Spleen (tissue), 13 donors: ENCODE measurements at regions of chr16 and their contacts with region 1.

Region 1: GRCh38 chr16:714558-715476 is at the start of gene METRN:
- DNase-seq: peak; percentile 95
- H3K4me3 ChIP-seq: peak within 1 kb of the TSS; percentile 67 to 93 (median 71)
- H3K27ac ChIP-seq: peak within 1 kb of the TSS in 3 of 8 donors; percentile 32 to 59 (median 55)
- H3K4me1 ChIP-seq: peaks cover 9 to 67% (median 39%) of the 10 kb centered on the region in 6 donors
- H3K27me3 ChIP-seq: peaks cover 8 to 81% (median 29%) of the 10 kb centered on the region in 7 donors
- CTCF ChIP-seq: peak in 1 of 11 experiments; percentile 6
- POLR2A ChIP-seq: no peak
- total RNA-seq, gene METRN: 7.2 to 20.2 (median 12.8) TPM

Region 2: GRCh38 chr16:788394-789126 is 73.7 kb after region 1 on chr16 and contains the start of gene CHTF18:
- intact Hi-C with region 1: loop called (anchors 5 kb)
- DNase-seq: peak; percentile 95
- H3K4me3 ChIP-seq: peak within 1 kb of the TSS; percentile 92 to 99 (median 97)
- H3K27ac ChIP-seq: peak within 1 kb of the TSS; percentile 53 to 90 (median 78)
- H3K4me1 ChIP-seq: peaks cover 17 to 45% (median 33%) of the 10 kb centered on the region in 6 donors
- H3K27me3 ChIP-seq: peaks cover 0 to 3% (median 0%) of the 10 kb centered on the region in 7 donors
- CTCF ChIP-seq: no peak
- POLR2A ChIP-seq: no peak
- total RNA-seq, gene CHTF18: 8.9 to 30.2 (median 18.5) TPM